ENCODE measurements at regions of chr9 and their contacts with region 1.

Region 1: DNA sequence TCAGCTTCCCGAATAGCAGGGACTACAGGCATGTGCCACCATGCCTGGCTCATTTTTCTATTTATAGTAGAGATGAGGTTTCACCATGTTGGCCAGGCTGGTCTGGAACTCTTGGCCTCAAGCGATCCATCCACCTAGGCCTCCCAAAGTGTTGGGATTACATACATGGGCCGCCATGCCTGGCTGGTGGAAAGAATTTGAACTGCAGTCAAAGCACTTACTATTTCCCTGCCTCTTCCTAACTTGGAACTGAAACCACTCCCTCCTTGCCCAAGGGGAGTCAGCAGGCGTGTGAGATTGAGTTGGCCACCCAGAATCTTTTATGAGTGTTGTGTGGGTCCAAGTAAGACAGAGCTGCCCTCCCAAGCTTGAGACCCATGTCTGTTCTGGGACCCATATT is 86.1 kb upstream of the PTPN3 start:
- DNase-seq: no peak
- ATAC-seq: no peak
- H3K4me3 ChIP-seq: no peak overlapping the region
- H3K27ac ChIP-seq: no peak overlapping the region
- H3K4me1 ChIP-seq: no peaks in the 10 kb centered on the region
- H3K27me3 ChIP-seq: no peaks in the 10 kb centered on the region
- CTCF ChIP-seq: no peak

Region 2: GRCh38 chr9:109411798-109412352 is 172.3 kb before region 1 on chr9:
- intact Hi-C with region 1: no loop called
- DNase-seq: no peak
- ATAC-seq: peak; percentile 23
- H3K4me3 ChIP-seq: no peak overlapping the region
- H3K27ac ChIP-seq: no peak overlapping the region
- H3K4me1 ChIP-seq: no peaks in the 10 kb centered on the region
- H3K27me3 ChIP-seq: no peaks in the 10 kb centered on the region
- CTCF ChIP-seq: peak; percentile 66

Region 3: GRCh38 chr9:110217656-110218099 is 633.5 kb after region 1 on chr9:
- intact Hi-C with region 1: loop called (anchors 10 kb)
- DNase-seq: no peak
- ATAC-seq: peak; percentile 47
- H3K4me3 ChIP-seq: no peak overlapping the region
- H3K27ac ChIP-seq: no peak overlapping the region
- H3K4me1 ChIP-seq: peaks cover 6% of the 10 kb centered on the region
- H3K27me3 ChIP-seq: no peaks in the 10 kb centered on the region
- CTCF ChIP-seq: peak; percentile 80

Measured in upper lobe of right lung (tissue), 1 donor.